Activated T-helper 1 cell treated with anti-CD3 and anti-CD28 coated beads, Interleukin-12 subunit alpha, Interleukin-12 subunit beta, Interleukin-2, Interleukin-4 antibody, amounts not matched to agents 30 ng/mL and 10 ng/mL and 1 ng/mL, durations not matched to agents 14 hours and 24 hours and 36 hours (primary cell): ENCODE measurements at regions of chr2 and their contacts with region 1.

Region 1: GRCh38 chr2:230582851-230583283 is 129.8 kb upstream of the CAB39 start:
- DNase-seq: no peak
- H3K4me3 Mint-ChIP-seq: peak overlapping the region; percentile 24
- H3K27ac Mint-ChIP-seq: peak overlapping the region; percentile 62
- H3K4me1 Mint-ChIP-seq: peaks cover 27% of the 10 kb centered on the region
- H3K27me3 Mint-ChIP-seq: no peaks in the 10 kb centered on the region

Region 2: DNA sequence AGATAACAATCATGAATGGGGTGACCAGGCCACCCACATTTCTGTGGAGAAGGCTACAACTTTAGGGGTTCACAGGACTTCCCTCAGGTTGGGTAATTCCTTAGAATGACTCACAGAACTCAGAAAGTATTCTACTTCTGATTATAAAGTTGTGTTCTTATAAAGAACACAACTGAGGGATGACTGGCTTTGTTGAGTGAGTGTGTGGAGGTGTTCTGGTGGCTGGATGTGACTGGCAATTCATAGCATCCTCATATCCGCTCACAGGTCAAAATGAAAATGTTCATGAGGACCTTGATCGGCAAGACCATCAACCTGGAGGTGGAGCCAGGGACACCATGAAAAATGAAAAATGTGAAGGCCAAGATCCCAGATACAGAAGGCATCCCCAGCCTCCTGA is 13.6 kb before region 1 on chr2:
- intact Hi-C with region 1: loop called (anchors 1 kb)
- DNase-seq: no peak
- H3K4me3 Mint-ChIP-seq: no peak overlapping the region
- H3K27ac Mint-ChIP-seq: no peak overlapping the region
- H3K4me1 Mint-ChIP-seq: peaks cover 25% of the 10 kb centered on the region
- H3K27me3 Mint-ChIP-seq: no peaks in the 10 kb centered on the region

Region 3: DNA sequence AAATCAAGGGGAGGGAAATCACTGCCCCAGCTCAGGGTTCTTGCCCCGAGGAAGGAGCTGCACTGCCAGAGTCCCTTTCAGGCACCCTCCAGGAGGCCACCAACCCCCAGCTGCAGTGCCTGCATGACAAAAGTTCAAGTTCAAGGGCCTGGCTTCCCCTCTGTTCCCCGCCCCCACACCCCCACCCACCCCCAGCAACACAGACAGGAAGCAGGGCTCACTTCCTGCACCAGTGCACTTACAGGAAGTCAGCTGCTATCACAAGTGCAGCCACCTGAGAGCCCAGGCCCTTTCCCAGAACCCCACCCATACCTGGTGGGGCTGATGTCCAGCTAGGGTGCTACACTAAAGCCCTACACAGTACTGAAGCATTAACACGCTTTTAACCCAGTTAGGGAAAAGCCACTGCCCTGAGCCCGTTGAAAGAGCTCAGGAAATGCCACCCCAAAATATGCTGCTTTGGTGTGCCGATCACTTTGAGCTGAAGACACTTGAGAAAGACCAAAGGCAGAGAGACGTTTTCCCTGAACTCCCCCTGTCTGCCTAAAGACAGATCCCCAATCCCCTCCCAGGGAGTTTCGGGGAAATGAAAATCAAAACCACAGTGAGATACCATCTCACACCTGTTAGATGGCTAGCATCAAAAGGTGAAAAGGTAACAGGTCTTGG is 19.8 kb after region 1 on chr2:
- intact Hi-C with region 1: loop called (anchors 1 kb)
- DNase-seq: peak; percentile 37
- H3K4me3 Mint-ChIP-seq: peak overlapping the region; percentile 34
- H3K27ac Mint-ChIP-seq: peak overlapping the region; percentile 82
- H3K4me1 Mint-ChIP-seq: peaks cover 71% of the 10 kb centered on the region
- H3K27me3 Mint-ChIP-seq: no peaks in the 10 kb centered on the region

Region 4: GRCh38 chr2:230643576-230644291 is 60.9 kb after region 1 on chr2:
- intact Hi-C with region 1: loop called (anchors 2 kb)
- DNase-seq: peak; percentile 51
- H3K4me3 Mint-ChIP-seq: peak overlapping the region; percentile 39
- H3K27ac Mint-ChIP-seq: peak overlapping the region; percentile 97
- H3K4me1 Mint-ChIP-seq: peaks cover 29% of the 10 kb centered on the region
- H3K27me3 Mint-ChIP-seq: no peaks in the 10 kb centered on the region